CD8-positive, alpha-beta memory T cell (primary cell): ENCODE measurements at regions of chr7 and their contacts with region 1.

Region 1: DNA sequence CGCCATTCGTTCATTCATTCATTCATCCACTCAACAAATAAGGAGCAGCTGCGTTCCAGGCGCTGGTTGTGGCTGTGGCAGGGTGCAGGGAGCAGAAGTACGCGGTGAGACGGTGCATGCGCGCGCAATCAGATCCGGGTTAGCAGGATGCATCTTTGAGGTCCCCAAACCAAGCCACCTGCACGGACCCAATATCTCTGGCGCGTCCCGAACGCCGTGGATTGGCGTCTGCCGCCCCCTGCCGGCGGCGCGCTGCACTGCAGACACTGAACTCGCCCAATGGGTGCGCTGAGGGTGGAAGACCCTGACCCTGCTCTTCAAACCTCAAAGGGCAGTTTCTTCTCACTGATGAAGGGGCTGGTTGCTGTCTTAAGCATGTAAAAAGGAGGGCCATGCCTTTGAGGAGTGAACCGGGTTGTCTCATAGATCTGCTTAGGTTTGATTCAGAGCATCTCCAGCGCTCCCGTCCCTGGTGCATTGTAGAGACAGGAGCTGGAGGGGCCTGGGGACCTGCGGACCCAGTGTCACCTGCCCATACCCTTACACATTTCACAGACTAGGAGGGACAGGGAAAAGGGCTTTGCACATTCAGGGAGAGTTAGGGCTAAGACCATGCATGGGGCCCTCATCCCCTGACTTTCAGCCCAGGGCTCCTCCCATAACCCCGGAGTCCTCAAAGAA is 102.5 kb downstream of the RAMP3 start:
- DNase-seq: peak; percentile 43 to 67 (median 50)
- H3K4me3 ChIP-seq: no peak overlapping the region
- H3K4me3 Mint-ChIP-seq: no peak overlapping the region
- H3K27ac ChIP-seq: no peak overlapping the region
- H3K27ac Mint-ChIP-seq: no peak overlapping the region
- H3K4me1 ChIP-seq: no peaks in the 10 kb centered on the region
- H3K4me1 Mint-ChIP-seq: peaks cover 0 to 8% (median 0%) of the 10 kb centered on the region in 3 donors
- H3K27me3 ChIP-seq: no peaks in the 10 kb centered on the region
- H3K27me3 Mint-ChIP-seq: peaks cover 13 to 28% of the 10 kb centered on the region in 2 donors

Region 2: DNA sequence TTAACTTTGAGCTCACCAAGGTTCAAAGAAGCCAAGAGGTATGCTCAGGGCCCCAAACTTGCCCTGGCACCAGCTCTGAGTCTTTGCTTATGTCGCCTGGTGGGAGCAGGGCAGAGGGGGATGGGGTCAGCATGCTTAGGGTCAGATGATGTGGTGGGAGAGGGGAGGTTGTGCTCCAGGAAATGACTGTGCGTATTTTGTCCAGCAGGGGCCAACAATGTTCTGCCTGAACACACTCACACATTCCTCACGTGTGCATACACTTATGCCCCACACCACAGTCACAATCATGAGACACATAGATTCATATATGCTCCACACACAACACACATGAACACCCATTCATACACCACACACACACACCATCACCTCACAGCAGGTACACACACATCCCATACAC is 106.9 kb before region 1 on chr7:
- CTCF ChIA-PET with region 1: interaction called, 16 read pairs
- POLR2A ChIA-PET with region 1: no interaction called
- DNase-seq: peak in 1 of 5 donors; percentile 18
- H3K4me3 ChIP-seq: no peak overlapping the region
- H3K4me3 Mint-ChIP-seq: no peak overlapping the region
- H3K27ac ChIP-seq: no peak overlapping the region
- H3K27ac Mint-ChIP-seq: peak overlapping the region in 1 of 8 donors; percentile 0
- H3K4me1 ChIP-seq: no peaks in the 10 kb centered on the region
- H3K4me1 Mint-ChIP-seq: peaks cover 1 to 6% (median 6%) of the 10 kb centered on the region in 3 donors
- H3K27me3 ChIP-seq: peaks cover under 1% of the 10 kb centered on the region
- H3K27me3 Mint-ChIP-seq: peaks cover 24 to 37% of the 10 kb centered on the region in 2 donors